GM23248 (cell line): ENCODE measurements at regions of chr21 and their contacts with region 1.

Region 1: DNA sequence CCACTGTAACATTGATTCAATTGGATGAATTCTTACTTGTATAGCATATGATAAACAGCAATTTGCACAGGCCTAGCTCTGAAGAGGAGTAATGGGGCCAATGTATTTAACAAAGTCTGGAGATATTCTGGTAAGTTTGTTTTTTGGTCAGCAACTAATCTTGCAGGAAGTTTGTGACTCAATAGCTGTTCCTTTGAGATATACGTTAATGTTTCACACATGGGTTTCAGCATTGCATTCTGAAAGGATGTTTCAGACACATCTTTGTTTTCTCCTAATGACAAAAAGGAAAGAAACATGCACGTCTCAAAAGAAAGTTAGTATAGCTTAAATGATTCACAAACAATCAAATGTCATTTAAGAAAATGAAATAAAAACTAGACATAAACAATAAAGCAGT is 49.0 kb downstream of the LTN1 start:
- DNase-seq: peak; percentile 68
- H3K4me3 ChIP-seq: peak overlapping the region; percentile 2; the same call in 1 of the 2 replicates
- H3K27ac ChIP-seq: peak overlapping the region; percentile 43
- H3K4me1 ChIP-seq: peaks cover 23% of the 10 kb centered on the region
- H3K27me3 ChIP-seq: no peaks in the 10 kb centered on the region

Region 2: DNA sequence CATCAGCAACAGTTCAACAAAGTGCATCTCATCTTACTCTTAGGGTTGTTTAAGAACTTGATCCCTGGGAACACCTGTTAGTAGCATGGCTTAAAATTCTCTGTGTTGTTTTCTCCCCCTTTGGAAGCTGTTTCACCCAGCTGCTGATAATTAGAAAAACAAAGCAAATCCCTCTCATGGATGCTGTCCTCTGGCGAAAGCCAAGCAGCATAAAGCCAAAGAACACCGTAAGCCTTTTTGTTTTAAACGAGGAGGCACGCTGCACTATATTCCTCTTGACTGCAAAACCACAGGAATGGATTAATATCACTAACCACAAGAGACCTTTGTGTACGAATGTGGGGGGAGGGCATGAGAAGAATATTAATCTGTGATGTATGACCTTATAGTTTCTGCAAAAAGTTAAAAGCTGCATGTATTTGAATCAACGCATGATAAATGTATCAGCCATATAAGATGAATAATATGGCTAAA is 874.1 kb before region 1 on chr21:
- in situ Hi-C with region 1: loop called (anchors 25 kb)
- DNase-seq: peak; percentile 27
- H3K4me3 ChIP-seq: no peak overlapping the region
- H3K27ac ChIP-seq: no peak overlapping the region
- H3K4me1 ChIP-seq: peaks cover 26% of the 10 kb centered on the region
- H3K27me3 ChIP-seq: no peaks in the 10 kb centered on the region

Region 3: GRCh38 chr21:28852706-28853105 is 90.9 kb before region 1 on chr21:
- in situ Hi-C with region 1: no loop called
- DNase-seq: no peak
- H3K4me3 ChIP-seq: no peak overlapping the region
- H3K27ac ChIP-seq: no peak overlapping the region
- H3K4me1 ChIP-seq: no peaks in the 10 kb centered on the region
- H3K27me3 ChIP-seq: no peaks in the 10 kb centered on the region

Region 4: GRCh38 chr21:29989634-29990234 is 1046.1 kb after region 1 on chr21:
- in situ Hi-C with region 1: no loop called
- DNase-seq: no peak
- H3K4me3 ChIP-seq: no peak overlapping the region
- H3K27ac ChIP-seq: no peak overlapping the region
- H3K4me1 ChIP-seq: no peaks in the 10 kb centered on the region
- H3K27me3 ChIP-seq: no peaks in the 10 kb centered on the region